Mammary epithelial cell (primary cell): ENCODE measurements at regions of chr11 and their contacts with region 1.

Region 1: DNA sequence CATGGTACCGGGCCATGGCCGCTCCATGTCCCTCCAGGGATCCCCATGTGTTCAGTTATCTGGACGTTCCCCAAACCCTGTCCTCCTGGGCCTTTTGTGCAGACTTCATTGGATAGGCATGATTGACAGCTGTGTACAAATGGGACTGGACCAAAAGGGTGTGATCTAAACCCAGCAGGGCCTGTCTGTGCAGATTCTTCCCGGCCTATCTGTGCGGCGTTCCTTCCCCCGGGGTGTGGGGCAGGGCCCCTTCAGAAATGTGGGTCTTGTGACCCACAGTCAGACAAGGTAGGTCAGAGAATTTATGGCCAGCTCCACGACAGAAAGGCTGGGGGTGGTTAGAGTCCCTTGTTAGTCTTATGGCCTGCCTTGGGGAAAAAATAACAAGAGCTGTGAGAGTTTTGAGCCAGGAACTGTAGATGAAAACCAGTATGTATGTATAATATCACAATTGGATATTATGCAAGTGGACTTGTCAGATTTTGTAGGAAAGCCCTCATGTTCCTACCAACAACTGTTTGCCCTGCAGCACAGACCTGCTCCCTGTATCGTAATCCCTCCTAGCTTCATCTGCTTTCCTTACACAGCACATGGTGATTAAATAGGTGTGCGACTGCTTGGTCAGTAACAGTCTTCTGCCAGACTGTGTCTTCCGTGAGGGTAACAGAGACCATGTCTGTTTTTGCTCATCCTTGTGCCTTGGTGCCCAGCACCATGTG is 31.7 kb downstream of the AP2A2 start:
- DNase-seq: no peak
- H3K4me3 ChIP-seq: no peak overlapping the region
- H3K27ac ChIP-seq: no peak overlapping the region
- H3K4me1 ChIP-seq: no peaks in the 10 kb centered on the region
- H3K27me3 ChIP-seq: no peaks in the 10 kb centered on the region
- CTCF ChIP-seq: no peak

Region 2: DNA sequence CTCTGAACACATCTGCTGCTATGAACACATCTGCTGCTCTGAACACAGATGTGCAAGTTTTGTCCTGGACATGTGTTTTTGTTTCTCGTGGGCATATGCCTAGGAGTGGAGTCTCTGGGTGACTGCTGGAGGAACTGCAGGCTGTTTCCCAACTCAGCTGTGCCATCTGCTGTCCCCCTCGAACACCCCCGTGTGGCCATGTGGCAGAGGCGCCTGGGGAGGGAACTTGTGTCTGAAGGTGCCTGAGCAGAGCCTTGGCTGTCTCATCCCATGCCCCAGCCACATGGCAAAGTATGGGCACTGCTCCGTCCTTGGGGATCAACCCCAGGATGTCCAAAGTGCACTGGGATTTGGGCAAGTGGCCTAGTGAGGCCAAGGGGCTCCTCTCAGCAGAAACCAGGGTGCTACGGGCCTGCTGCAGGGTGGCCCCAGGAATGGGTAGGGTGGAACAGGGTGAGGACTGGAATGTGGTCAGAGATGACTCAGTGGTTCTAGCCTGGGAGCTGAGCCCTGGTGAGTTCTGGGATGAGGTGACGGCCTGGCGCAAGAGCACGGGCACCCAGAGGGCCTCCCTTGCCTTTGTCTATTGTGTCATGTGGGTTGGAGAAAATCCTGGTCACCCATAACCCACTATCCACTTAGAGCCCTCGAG is 194.8 kb before region 1 on chr11:
- CTCF ChIA-PET with region 1: no interaction called
- dilution Hi-C with region 1: no loop called
- in situ Hi-C with region 1: no loop called
- intact Hi-C with region 1: no loop called
- DNase-seq: peak; percentile 87
- H3K4me3 ChIP-seq: no peak overlapping the region
- H3K27ac ChIP-seq: peak overlapping the region; percentile 70
- H3K4me1 ChIP-seq: peaks cover 20% of the 10 kb centered on the region
- H3K27me3 ChIP-seq: no peaks in the 10 kb centered on the region
- CTCF ChIP-seq: peak; percentile 37 to 52

Region 3: GRCh38 chr11:898143-898511 is 59.2 kb before region 1 on chr11:
- CTCF ChIA-PET with region 1: no interaction called
- dilution Hi-C with region 1: no loop called
- in situ Hi-C with region 1: no loop called
- intact Hi-C with region 1: no loop called
- DNase-seq: no peak
- H3K4me3 ChIP-seq: no peak overlapping the region
- H3K27ac ChIP-seq: no peak overlapping the region
- H3K4me1 ChIP-seq: no peaks in the 10 kb centered on the region
- H3K27me3 ChIP-seq: no peaks in the 10 kb centered on the region
- CTCF ChIP-seq: peak; percentile 34 to 38

Region 4: DNA sequence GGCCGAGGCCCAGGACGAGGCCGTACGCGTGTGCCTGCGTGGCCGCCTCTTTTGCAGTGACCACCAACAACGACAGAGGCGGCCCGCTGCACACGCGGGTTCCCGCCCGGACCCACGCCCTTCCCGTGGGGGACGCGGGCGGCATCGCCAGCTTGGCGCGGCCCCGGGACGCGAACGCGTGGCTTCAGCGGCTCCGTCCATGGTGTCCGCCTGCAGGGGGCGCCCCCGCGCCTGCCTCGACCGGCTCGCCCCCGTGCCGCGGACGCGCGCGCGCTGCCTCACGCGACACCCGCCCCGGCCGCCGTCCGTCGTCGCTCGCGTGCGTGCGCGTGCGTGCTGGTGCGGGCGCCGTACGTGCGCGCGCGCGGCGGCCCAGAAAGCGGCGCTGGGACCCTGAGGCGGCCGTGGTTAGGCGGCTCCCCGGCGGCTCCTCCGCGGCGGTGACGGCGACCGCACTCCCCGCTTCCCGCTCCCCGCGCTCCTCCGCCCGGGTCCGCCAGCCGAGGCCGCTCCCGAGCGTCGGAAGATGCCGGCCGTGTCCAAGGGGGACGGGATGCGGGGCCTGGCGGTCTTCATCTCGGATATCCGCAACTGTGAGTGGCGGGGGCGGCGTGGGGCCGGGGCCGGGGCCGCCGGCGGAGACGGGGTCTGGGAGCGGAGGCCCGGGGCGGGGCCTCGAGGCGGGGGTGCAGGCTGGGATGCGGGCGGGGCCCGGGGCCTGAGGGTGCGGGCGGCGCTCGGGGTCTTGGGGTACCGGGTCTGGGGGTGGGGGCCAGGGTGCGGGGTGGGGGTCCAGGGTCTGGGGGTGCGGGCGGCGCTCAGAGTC is 31.7 kb before region 1 on chr11 and contains the start of gene AP2A2:
- CTCF ChIA-PET with region 1: no interaction called
- dilution Hi-C with region 1: no loop called
- in situ Hi-C with region 1: no loop called
- intact Hi-C with region 1: loop called (anchors 1 kb)
- DNase-seq: peak; percentile 81
- H3K4me3 ChIP-seq: peak within 1 kb of the TSS; percentile 72 to 82 (median 78)
- H3K27ac ChIP-seq: peak within 1 kb of the TSS; percentile 29
- H3K4me1 ChIP-seq: peaks cover 6% of the 10 kb centered on the region
- H3K27me3 ChIP-seq: no peaks in the 10 kb centered on the region
- CTCF ChIP-seq: peak; percentile 39 to 57
- total RNA-seq, gene AP2A2: 66.6 to 66.7 TPM

Region 5: GRCh38 chr11:1017269-1018005 is 60.1 kb after region 1 on chr11:
- CTCF ChIA-PET with region 1: no interaction called
- dilution Hi-C with region 1: no loop called
- in situ Hi-C with region 1: no loop called
- intact Hi-C with region 1: no loop called
- DNase-seq: peak; percentile 12
- H3K4me3 ChIP-seq: no peak overlapping the region
- H3K27ac ChIP-seq: no peak overlapping the region
- H3K4me1 ChIP-seq: no peaks in the 10 kb centered on the region
- H3K27me3 ChIP-seq: no peaks in the 10 kb centered on the region
- CTCF ChIP-seq: no peak